SK-N-SH (cell line): ENCODE measurements at regions of chr13 and their contacts with region 1.

Region 1: GRCh38 chr13:106536244-106537034 is 977 bp upstream of the EFNB2 start:
- DNase-seq: peak; percentile 81
- H3K4me3 ChIP-seq: peak overlapping the region; percentile 76 to 77
- H3K27ac ChIP-seq: peak overlapping the region in 1 of 2 experiments; percentile 62; a peak in 1 of 4 replicates
- H3K4me1 ChIP-seq: peaks cover 0 to 8% of the 10 kb centered on the region in 2 experiments; a peak in 2 of 4 replicates
- H3K27me3 ChIP-seq: no peaks in the 10 kb centered on the region
- CTCF ChIP-seq: peak; percentile 96
- EP300 ChIP-seq: no peak
- RAD21 ChIP-seq: peak; percentile 95

Region 2: DNA sequence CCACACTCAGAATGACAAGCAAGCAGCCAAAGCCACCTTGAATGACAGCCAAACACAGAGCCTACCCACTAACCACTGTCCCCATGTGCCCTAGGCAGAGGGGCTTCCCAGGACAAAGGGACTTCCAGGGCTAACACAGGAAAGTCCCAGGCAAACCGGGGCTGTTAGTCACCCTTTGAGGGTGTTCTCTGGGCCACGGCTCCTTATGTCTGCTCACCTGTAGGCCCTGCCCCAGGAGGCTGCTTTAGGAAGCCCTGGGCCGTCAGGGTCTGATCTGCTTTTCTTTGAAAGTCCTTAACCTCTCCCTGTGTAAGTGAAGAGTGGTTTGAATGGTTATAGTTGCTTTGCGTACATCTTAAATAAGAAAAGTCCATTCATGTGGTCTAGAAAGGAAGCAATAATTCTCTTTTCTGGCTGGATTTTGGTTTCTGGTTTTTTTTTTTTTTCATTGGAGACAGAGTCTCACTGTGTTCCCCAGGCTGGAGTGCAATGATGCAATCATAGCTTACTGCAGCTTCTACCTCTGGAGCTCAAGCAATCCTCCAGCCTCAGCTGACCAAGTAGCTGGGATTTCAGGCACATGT is 162.4 kb before region 1 on chr13:
- CTCF ChIA-PET with region 1: no interaction called
- POLR2A ChIA-PET with region 1: no interaction called
- DNase-seq: no peak
- H3K4me3 ChIP-seq: no peak overlapping the region
- H3K27ac ChIP-seq: peak overlapping the region; percentile 89 to 93
- H3K4me1 ChIP-seq: peaks cover 12 to 37% of the 10 kb centered on the region in 2 experiments
- H3K27me3 ChIP-seq: no peaks in the 10 kb centered on the region
- CTCF ChIP-seq: no peak
- EP300 ChIP-seq: 0 out of 4 replicates have a peak, but pooled peaks of 1 of the 2 experiments have one; percentile 27
- RAD21 ChIP-seq: no peak

Region 3: DNA sequence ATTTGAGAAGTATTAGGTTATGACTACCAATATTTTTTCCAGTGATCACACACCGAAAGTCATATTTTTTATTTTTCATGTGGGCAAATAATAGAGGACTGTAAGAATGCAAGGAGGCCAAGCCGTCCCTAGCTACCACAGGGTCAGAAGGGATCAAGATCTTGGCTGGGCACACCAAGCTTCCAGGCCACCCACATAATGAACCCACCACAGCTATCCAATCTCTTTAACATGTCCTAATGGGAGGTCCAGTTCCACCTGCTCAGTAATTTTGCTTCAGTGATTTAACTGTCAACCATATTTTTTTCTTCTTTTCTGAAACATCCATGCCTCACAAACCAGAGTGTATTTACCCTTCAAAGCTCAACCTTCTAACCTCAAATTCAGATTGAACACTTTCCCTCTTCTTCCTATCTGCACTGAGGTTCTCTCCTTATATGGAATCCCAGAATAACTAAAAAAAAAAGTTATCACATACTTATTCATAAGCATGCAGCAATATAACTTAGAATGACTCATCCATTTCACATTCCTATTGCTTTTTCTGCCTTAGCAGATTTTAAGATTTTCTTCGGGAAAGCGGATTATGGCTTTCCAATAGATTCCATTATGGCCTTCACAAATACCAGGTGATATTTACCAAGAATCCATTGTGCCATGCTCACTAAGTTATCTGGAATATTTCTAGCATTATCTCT is 19.3 kb after region 1 on chr13:
- CTCF ChIA-PET with region 1: interaction called, 17 read pairs
- POLR2A ChIA-PET with region 1: no interaction called
- DNase-seq: no peak
- H3K4me3 ChIP-seq: no peak overlapping the region
- H3K27ac ChIP-seq: no peak overlapping the region; a peak in 1 of 4 replicates
- H3K4me1 ChIP-seq: peaks cover 0 to 3% of the 10 kb centered on the region in 2 experiments; a peak in 1 of 4 replicates
- H3K27me3 ChIP-seq: no peaks in the 10 kb centered on the region
- CTCF ChIP-seq: no peak
- EP300 ChIP-seq: no peak
- RAD21 ChIP-seq: no peak